Naive thymus-derived CD4-positive, alpha-beta T cell (primary cell): ENCODE measurements at regions of chrX and their contacts with region 1.

Region 1: DNA sequence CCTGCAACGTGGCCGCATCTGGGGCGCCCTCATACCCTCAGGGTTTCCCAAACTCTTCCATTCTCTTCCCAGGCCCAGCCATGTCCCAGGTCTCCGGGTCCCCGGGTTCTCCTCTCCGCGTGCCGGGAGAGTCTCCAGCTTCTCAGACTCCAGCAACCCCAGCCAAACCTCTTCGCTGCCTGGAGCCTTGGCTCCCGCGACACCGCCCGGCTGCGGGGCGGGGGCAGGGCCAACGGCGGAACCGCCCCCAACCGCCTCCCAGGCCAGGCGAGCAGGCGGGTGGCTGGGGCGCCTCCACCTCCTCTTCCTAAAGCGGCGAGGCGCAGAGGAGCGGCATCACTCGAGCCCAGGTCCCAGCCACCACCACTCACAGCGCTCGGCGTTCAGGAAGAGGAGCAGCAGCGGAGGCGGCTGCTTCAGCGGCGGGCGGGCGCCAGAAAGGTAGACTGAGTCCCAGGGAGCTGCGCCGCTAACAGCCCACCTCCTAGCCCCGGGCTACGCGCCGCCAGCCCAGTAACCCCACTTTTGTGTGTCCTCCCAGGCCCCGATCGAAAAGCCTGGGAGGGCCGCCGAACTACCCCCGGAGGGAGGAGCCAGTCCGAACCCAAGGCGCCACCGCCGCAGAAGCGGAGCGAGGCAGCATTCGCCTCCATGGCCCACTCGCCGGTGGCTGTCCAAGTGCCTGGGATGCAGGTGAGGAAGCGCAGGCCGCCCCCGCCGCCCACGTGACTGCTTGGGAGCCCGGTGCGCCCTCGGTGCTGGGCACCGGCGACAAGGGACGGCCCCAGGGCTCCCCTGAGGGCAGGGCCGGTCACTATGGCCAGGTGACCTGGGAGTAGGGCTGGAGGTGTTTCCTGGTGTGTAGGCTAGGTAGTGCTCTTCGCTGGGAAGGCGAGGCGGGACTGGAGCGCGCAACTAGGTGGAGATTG is at the start of gene STK26:
- DNase-seq: peak; percentile 55 to 83 (median 78)
- ATAC-seq: peak; percentile 93
- H3K4me3 ChIP-seq: peak within 1 kb of the TSS; percentile 72
- H3K4me3 Mint-ChIP-seq: peak within 1 kb of the TSS; percentile 90 to 98 (median 94)
- H3K27ac ChIP-seq: peak within 1 kb of the TSS; percentile 86
- H3K27ac Mint-ChIP-seq: peak within 1 kb of the TSS; percentile 71 to 95 (median 93)
- H3K4me1 ChIP-seq: peaks cover 15 to 19% of the 10 kb centered on the region in 2 donors
- H3K4me1 Mint-ChIP-seq: peaks cover 17 to 43% (median 39%) of the 10 kb centered on the region in 7 donors
- H3K27me3 ChIP-seq: no peaks in the 10 kb centered on the region
- H3K27me3 Mint-ChIP-seq: no peaks in the 10 kb centered on the region
- total RNA-seq, gene STK26: 29.7 to 50.1 (median 45.1) TPM

Region 2: DNA sequence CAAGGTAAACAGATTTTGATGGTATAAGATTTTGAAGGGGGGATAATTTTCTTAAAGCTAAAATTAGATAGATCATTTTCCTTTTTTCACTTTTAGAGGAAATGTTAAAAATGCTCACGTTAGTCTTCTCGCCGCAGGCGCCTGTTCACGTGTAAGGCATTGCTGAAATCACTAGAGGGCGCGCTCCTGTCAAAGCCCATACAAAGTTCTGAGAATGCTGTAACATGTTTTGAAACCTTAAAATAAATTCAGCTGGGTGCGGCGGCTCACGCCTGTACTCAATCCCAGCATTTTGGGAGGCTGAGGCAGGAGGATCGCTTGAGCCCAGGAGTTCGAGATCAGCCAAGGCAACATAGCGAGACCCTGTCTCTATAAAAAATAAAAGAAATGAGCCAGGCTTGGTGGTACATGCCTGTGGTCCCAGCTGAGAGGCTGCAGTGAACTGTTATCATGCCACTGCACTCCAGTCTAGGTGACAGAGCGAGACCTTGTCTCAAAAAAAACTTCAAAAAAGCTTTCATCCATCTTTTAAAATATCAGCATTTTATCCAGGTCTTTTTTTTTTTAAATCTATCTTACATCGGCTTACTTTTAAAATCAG is 1483.4 kb before region 1 on chrX:
- CTCF ChIA-PET with region 1: no interaction called
- POLR2A ChIA-PET with region 1: no interaction called
- intact Hi-C with region 1: no loop called
- DNase-seq: peak in 6 of 9 donors; percentile 16 to 39 (median 23)
- ATAC-seq: no peak
- H3K4me3 ChIP-seq: no peak overlapping the region
- H3K4me3 Mint-ChIP-seq: no peak overlapping the region
- H3K27ac ChIP-seq: no peak overlapping the region
- H3K27ac Mint-ChIP-seq: no peak overlapping the region
- H3K4me1 ChIP-seq: no peaks in the 10 kb centered on the region
- H3K4me1 Mint-ChIP-seq: no peaks in the 10 kb centered on the region
- H3K27me3 ChIP-seq: no peaks in the 10 kb centered on the region
- H3K27me3 Mint-ChIP-seq: peaks cover 0 to 7% (median 0%) of the 10 kb centered on the region in 5 donors

Region 3: GRCh38 chrX:130902783-130903613 is 1120.2 kb before region 1 on chrX and contains the start of gene ENOX2:
- CTCF ChIA-PET with region 1: no interaction called
- POLR2A ChIA-PET with region 1: no interaction called
- intact Hi-C with region 1: loop called (anchors 5 kb)
- DNase-seq: peak; percentile 51 to 90 (median 83)
- ATAC-seq: peak; percentile 98
- H3K4me3 ChIP-seq: peak within 1 kb of the TSS; percentile 79
- H3K4me3 Mint-ChIP-seq: no peak within 1 kb of the TSS
- H3K27ac ChIP-seq: peak within 1 kb of the TSS; percentile 93
- H3K27ac Mint-ChIP-seq: peak within 1 kb of the TSS in 6 of 9 donors; percentile 51 to 91 (median 71)
- H3K4me1 ChIP-seq: peaks cover 0 to 5% of the 10 kb centered on the region in 2 donors
- H3K4me1 Mint-ChIP-seq: peaks cover 5 to 14% (median 12%) of the 10 kb centered on the region in 7 donors
- H3K27me3 ChIP-seq: no peaks in the 10 kb centered on the region
- H3K27me3 Mint-ChIP-seq: no peaks in the 10 kb centered on the region
- total RNA-seq, gene ENOX2: 10.3 to 15.3 (median 12.1) TPM

Region 4: GRCh38 chrX:131068945-131069719 is 954.1 kb before region 1 on chrX:
- CTCF ChIA-PET with region 1: no interaction called
- POLR2A ChIA-PET with region 1: no interaction called
- intact Hi-C with region 1: no loop called
- DNase-seq: no peak
- ATAC-seq: no peak
- H3K4me3 ChIP-seq: no peak overlapping the region
- H3K4me3 Mint-ChIP-seq: no peak overlapping the region
- H3K27ac ChIP-seq: no peak overlapping the region
- H3K27ac Mint-ChIP-seq: no peak overlapping the region
- H3K4me1 ChIP-seq: no peaks in the 10 kb centered on the region
- H3K4me1 Mint-ChIP-seq: peaks cover 0 to 7% (median 0%) of the 10 kb centered on the region in 7 donors
- H3K27me3 ChIP-seq: no peaks in the 10 kb centered on the region
- H3K27me3 Mint-ChIP-seq: peaks cover 32 to 58% (median 44%) of the 10 kb centered on the region in 5 donors

Region 5: GRCh38 chrX:131710431-131711045 is 312.7 kb before region 1 on chrX:
- CTCF ChIA-PET with region 1: no interaction called
- POLR2A ChIA-PET with region 1: no interaction called
- intact Hi-C with region 1: no loop called
- DNase-seq: no peak
- ATAC-seq: no peak
- H3K4me3 ChIP-seq: no peak overlapping the region
- H3K4me3 Mint-ChIP-seq: peak overlapping the region in 5 of 10 donors; percentile 72 to 87 (median 84)
- H3K27ac ChIP-seq: no peak overlapping the region
- H3K27ac Mint-ChIP-seq: peak overlapping the region in 2 of 9 donors; percentile 14 to 76
- H3K4me1 ChIP-seq: no peaks in the 10 kb centered on the region
- H3K4me1 Mint-ChIP-seq: peaks cover 0 to 13% (median 0%) of the 10 kb centered on the region in 7 donors
- H3K27me3 ChIP-seq: no peaks in the 10 kb centered on the region
- H3K27me3 Mint-ChIP-seq: no peaks in the 10 kb centered on the region

Region 6: DNA sequence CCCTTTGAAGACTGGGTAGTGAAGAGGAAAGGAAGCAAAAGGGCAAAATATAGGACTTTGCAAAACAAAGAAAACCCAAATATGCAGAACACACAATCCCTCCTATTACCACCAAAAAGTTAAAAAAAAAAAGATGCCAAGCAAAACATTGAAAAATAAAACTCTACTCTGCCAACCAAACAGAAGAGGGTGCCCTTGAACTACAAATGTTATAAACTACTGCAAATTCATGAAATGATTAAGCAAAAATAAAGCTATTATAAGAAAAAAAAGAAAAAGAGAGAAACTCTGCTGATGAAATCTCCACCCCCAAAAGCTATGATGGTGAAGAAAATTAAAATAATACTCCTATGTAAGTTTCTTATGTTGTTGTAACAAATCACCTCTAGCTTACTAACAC is 168.7 kb before region 1 on chrX:
- CTCF ChIA-PET with region 1: no interaction called
- POLR2A ChIA-PET with region 1: no interaction called
- intact Hi-C with region 1: loop called in 1 of 2 experiments (anchors 1 kb)
- DNase-seq: peak in 5 of 9 donors; percentile 25 to 48 (median 36)
- ATAC-seq: no peak
- H3K4me3 ChIP-seq: no peak overlapping the region
- H3K4me3 Mint-ChIP-seq: no peak overlapping the region
- H3K27ac ChIP-seq: no peak overlapping the region
- H3K27ac Mint-ChIP-seq: peak overlapping the region in 1 of 9 donors; percentile 70
- H3K4me1 ChIP-seq: no peaks in the 10 kb centered on the region
- H3K4me1 Mint-ChIP-seq: no peaks in the 10 kb centered on the region
- H3K27me3 ChIP-seq: no peaks in the 10 kb centered on the region
- H3K27me3 Mint-ChIP-seq: no peaks in the 10 kb centered on the region

Region 7: GRCh38 chrX:132041015-132041414 is 17.8 kb after region 1 on chrX:
- CTCF ChIA-PET with region 1: no interaction called
- POLR2A ChIA-PET with region 1: interaction called, 4 read pairs
- intact Hi-C with region 1: loop called in 1 of 2 experiments (anchors 2 kb)
- DNase-seq: no peak
- ATAC-seq: no peak
- H3K4me3 ChIP-seq: no peak overlapping the region
- H3K4me3 Mint-ChIP-seq: no peak overlapping the region
- H3K27ac ChIP-seq: no peak overlapping the region
- H3K27ac Mint-ChIP-seq: peak overlapping the region in 1 of 9 donors; percentile 61
- H3K4me1 ChIP-seq: peaks cover 0 to under 1% of the 10 kb centered on the region in 2 donors
- H3K4me1 Mint-ChIP-seq: peaks cover 6 to 84% (median 73%) of the 10 kb centered on the region in 7 donors
- H3K27me3 ChIP-seq: no peaks in the 10 kb centered on the region
- H3K27me3 Mint-ChIP-seq: no peaks in the 10 kb centered on the region

Region 8: DNA sequence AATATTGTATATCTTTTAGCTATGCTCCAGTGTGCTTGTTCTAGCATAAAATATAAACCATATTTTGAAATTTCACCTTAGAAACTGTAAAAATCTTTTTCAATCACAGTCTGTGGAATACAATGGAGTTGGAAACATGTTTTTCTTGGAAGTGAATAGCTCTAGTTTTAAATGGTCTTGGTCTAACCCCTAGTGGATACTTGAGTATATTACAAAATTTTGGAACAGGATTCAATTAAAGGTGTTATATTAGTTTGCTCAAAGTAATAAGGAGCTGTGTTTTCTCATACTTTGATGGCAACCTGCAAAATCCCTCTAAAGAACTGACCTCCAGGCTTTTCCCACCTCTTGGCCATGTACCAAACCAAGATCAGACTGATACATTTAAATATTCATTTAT is 48.0 kb after region 1 on chrX:
- CTCF ChIA-PET with region 1: interaction called, 3 read pairs
- POLR2A ChIA-PET with region 1: interaction called, 8 read pairs
- intact Hi-C with region 1: loop called (anchors 1 to 2 kb)
- DNase-seq: peak in 2 of 9 donors; percentile 9 to 18
- ATAC-seq: no peak
- H3K4me3 ChIP-seq: no peak overlapping the region
- H3K4me3 Mint-ChIP-seq: no peak overlapping the region
- H3K27ac ChIP-seq: no peak overlapping the region
- H3K27ac Mint-ChIP-seq: no peak overlapping the region
- H3K4me1 ChIP-seq: no peaks in the 10 kb centered on the region
- H3K4me1 Mint-ChIP-seq: peaks cover 0 to 3% (median 0%) of the 10 kb centered on the region in 7 donors
- H3K27me3 ChIP-seq: no peaks in the 10 kb centered on the region
- H3K27me3 Mint-ChIP-seq: no peaks in the 10 kb centered on the region